ENCODE measurements at regions of chr4 and their contacts with region 1.

Region 1: GRCh38 chr4:11418610-11419009 is 10.1 kb downstream of the HS3ST1 start:
- DNase-seq: peak in 4 of 9 experiments; percentile 20 to 40 (median 23)
- ATAC-seq: no peak
- H3K4me3 ChIP-seq: no peak overlapping the region
- H3K4me3 Mint-ChIP-seq: no peak overlapping the region
- H3K27ac ChIP-seq: no peak overlapping the region
- H3K27ac Mint-ChIP-seq: no peak overlapping the region
- H3K4me1 ChIP-seq: no peaks in the 10 kb centered on the region
- H3K4me1 Mint-ChIP-seq: no peaks in the 10 kb centered on the region
- H3K27me3 ChIP-seq: no peaks in the 10 kb centered on the region
- H3K27me3 Mint-ChIP-seq: no peaks in the 10 kb centered on the region
- CTCF ChIP-seq: no peak

Region 2: DNA sequence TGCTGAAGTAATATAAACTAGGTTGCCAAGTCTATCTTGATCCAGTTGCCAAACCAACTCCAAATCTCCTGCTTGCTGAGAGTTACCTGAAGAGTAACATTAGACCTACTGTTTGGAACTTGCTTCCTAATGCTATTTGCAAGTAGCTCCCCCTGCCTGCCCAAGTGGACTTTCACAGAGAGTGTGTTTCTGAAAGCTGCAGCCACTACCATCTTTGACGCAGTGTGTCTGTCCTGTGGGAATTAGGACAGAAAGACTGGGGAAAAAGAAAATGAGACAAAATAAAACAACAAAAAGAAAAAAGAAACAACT is 205.1 kb after region 1 on chr4:
- CTCF ChIA-PET with region 1: no interaction called
- POLR2A ChIA-PET with region 1: no interaction called
- intact Hi-C with region 1: loop called in 1 of 2 experiments (anchors 10 kb)
- DNase-seq: peak in 2 of 9 experiments; percentile 3
- ATAC-seq: no peak
- H3K4me3 ChIP-seq: no peak overlapping the region
- H3K4me3 Mint-ChIP-seq: no peak overlapping the region
- H3K27ac ChIP-seq: no peak overlapping the region
- H3K27ac Mint-ChIP-seq: no peak overlapping the region
- H3K4me1 ChIP-seq: no peaks in the 10 kb centered on the region
- H3K4me1 Mint-ChIP-seq: no peaks in the 10 kb centered on the region
- H3K27me3 ChIP-seq: no peaks in the 10 kb centered on the region
- H3K27me3 Mint-ChIP-seq: no peaks in the 10 kb centered on the region
- CTCF ChIP-seq: no peak

Region 3: DNA sequence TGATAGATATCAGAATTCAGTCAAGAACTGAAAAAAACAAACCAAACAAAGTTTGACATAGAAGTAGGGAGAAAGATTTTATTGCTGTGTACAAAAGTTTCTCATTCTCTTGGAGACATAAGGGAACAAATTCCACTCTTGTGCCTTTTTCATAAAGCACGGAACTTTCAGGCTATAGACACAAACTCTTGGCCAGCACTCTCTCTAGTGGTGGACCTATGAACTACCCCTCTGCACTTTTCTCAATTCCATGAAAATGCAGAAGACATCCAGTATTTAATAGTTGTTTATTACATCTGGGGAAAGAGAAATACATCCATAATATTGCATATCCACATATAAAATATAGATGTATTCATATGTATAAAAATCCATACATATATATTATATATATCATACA is 301.7 kb after region 1 on chr4:
- CTCF ChIA-PET with region 1: no interaction called
- POLR2A ChIA-PET with region 1: no interaction called
- intact Hi-C with region 1: loop called in 1 of 2 experiments (anchors 5 kb)
- DNase-seq: peak in 1 of 9 experiments; percentile 7
- ATAC-seq: no peak
- H3K4me3 ChIP-seq: no peak overlapping the region
- H3K4me3 Mint-ChIP-seq: no peak overlapping the region
- H3K27ac ChIP-seq: no peak overlapping the region
- H3K27ac Mint-ChIP-seq: no peak overlapping the region
- H3K4me1 ChIP-seq: no peaks in the 10 kb centered on the region
- H3K4me1 Mint-ChIP-seq: no peaks in the 10 kb centered on the region
- H3K27me3 ChIP-seq: no peaks in the 10 kb centered on the region
- H3K27me3 Mint-ChIP-seq: peaks cover 19% of the 10 kb centered on the region
- CTCF ChIP-seq: no peak

Region 4: GRCh38 chr4:12633053-12633651 is 1214.5 kb after region 1 on chr4:
- CTCF ChIA-PET with region 1: no interaction called
- POLR2A ChIA-PET with region 1: no interaction called
- intact Hi-C with region 1: loop called in 1 of 2 experiments (anchors 1 kb)
- DNase-seq: peak; percentile 35 to 73 (median 65)
- ATAC-seq: peak; percentile 71
- H3K4me3 ChIP-seq: no peak overlapping the region
- H3K4me3 Mint-ChIP-seq: no peak overlapping the region
- H3K27ac ChIP-seq: no peak overlapping the region
- H3K27ac Mint-ChIP-seq: no peak overlapping the region
- H3K4me1 ChIP-seq: no peaks in the 10 kb centered on the region
- H3K4me1 Mint-ChIP-seq: no peaks in the 10 kb centered on the region
- H3K27me3 ChIP-seq: no peaks in the 10 kb centered on the region
- H3K27me3 Mint-ChIP-seq: peaks cover 12% of the 10 kb centered on the region
- CTCF ChIP-seq: peak; percentile 75

Region 5: GRCh38 chr4:12729384-12729783 is 1310.8 kb after region 1 on chr4:
- CTCF ChIA-PET with region 1: no interaction called
- POLR2A ChIA-PET with region 1: no interaction called
- intact Hi-C with region 1: loop called in 1 of 2 experiments (anchors 5 kb)
- DNase-seq: peak in 2 of 9 experiments; percentile 13 to 26
- ATAC-seq: no peak
- H3K4me3 ChIP-seq: no peak overlapping the region
- H3K4me3 Mint-ChIP-seq: no peak overlapping the region
- H3K27ac ChIP-seq: no peak overlapping the region
- H3K27ac Mint-ChIP-seq: no peak overlapping the region
- H3K4me1 ChIP-seq: no peaks in the 10 kb centered on the region
- H3K4me1 Mint-ChIP-seq: no peaks in the 10 kb centered on the region
- H3K27me3 ChIP-seq: no peaks in the 10 kb centered on the region
- H3K27me3 Mint-ChIP-seq: peaks cover 21% of the 10 kb centered on the region
- CTCF ChIP-seq: peak; percentile 55